Heart left ventricle (tissue), 16 donors: ENCODE measurements at regions of chr12 and their contacts with region 1.

Region 1: DNA sequence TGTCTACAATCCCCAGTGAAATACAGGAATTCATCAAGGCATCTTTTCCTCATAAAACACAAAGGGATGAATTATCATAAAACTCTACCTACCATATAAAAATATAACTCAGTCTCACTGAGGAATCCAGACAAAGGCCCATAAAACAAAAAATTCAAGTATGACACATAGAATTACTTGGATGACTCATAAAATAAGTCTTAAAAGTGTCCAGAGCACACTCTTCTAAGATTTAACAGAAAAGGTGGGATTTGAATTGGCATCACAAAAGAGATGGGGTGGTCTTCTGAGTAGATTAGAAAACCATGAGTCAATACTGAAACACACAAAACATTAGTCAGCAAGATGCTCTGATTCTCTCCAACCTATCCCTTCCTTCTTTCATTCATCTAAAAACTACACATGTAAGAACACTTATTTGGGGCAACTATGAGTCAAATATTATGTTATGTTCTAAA is 202.7 kb upstream of the GARIN6 start:
- DNase-seq: no peak
- ATAC-seq: no peak
- H3K4me3 ChIP-seq: no peak overlapping the region
- H3K27ac ChIP-seq: no peak overlapping the region
- H3K4me1 ChIP-seq: no peaks in the 10 kb centered on the region
- H3K27me3 ChIP-seq: no peaks in the 10 kb centered on the region
- CTCF ChIP-seq: no peak
- POLR2A ChIP-seq: no peak

Region 2: GRCh38 chr12:99427104-99427503 is 17.8 kb before region 1 on chr12:
- intact Hi-C with region 1: loop called in 1 of 10 experiments (anchors 2 kb)
- DNase-seq: no peak
- ATAC-seq: no peak
- H3K4me3 ChIP-seq: no peak overlapping the region
- H3K27ac ChIP-seq: no peak overlapping the region
- H3K4me1 ChIP-seq: no peaks in the 10 kb centered on the region
- H3K27me3 ChIP-seq: no peaks in the 10 kb centered on the region
- CTCF ChIP-seq: no peak
- POLR2A ChIP-seq: no peak